Endothelial cell of umbilical vein (primary cell): ENCODE measurements at regions of chr2 and their contacts with region 1.

Region 1: GRCh38 chr2:202278944-202279343 is 13.4 kb downstream of the NOP58 start:
- DNase-seq: peak; percentile 88
- H3K4me3 ChIP-seq: peak overlapping the region in 1 of 3 experiments; percentile 12
- H3K27ac ChIP-seq: peak overlapping the region; percentile 88
- H3K4me1 ChIP-seq: peaks cover 24% of the 10 kb centered on the region
- H3K27me3 ChIP-seq: no peaks in the 10 kb centered on the region
- CTCF ChIP-seq: peak; percentile 41 to 61
- POLR2A ChIP-seq: no peak

Region 2: GRCh38 chr2:201768918-201769317 is 510.0 kb before region 1 on chr2:
- CTCF ChIA-PET with region 1: no interaction called
- POLR2A ChIA-PET with region 1: no interaction called
- dilution Hi-C with region 1: no loop called
- intact Hi-C with region 1: no loop called
- DNase-seq: no peak
- H3K4me3 ChIP-seq: no peak overlapping the region
- H3K27ac ChIP-seq: no peak overlapping the region
- H3K4me1 ChIP-seq: peaks cover 8% of the 10 kb centered on the region
- H3K27me3 ChIP-seq: no peaks in the 10 kb centered on the region
- CTCF ChIP-seq: no peak
- POLR2A ChIP-seq: no peak

Region 3: DNA sequence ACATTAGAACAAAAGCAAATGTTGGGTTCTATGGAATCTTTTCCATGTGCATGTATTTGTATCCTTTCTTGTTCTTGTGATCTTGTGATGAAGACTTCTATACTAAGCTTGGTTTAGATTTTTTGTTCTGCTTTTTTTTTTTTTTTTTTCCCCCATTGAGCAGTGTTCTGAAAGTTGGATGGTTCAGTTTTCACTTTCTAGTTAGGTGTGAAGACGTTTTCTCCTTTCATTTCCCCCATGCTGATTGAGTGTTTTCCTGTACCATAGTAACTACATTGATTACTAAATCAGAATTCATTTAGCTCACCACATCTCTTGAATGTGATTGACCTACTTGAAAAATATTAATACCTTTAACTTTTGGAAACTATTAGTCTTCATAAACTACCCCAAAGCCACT is 20.8 kb after region 1 on chr2:
- CTCF ChIA-PET with region 1: interaction called, 15 read pairs
- POLR2A ChIA-PET with region 1: no interaction called
- dilution Hi-C with region 1: no loop called
- intact Hi-C with region 1: no loop called
- DNase-seq: no peak
- H3K4me3 ChIP-seq: no peak overlapping the region
- H3K27ac ChIP-seq: no peak overlapping the region
- H3K4me1 ChIP-seq: peaks cover 7% of the 10 kb centered on the region
- H3K27me3 ChIP-seq: no peaks in the 10 kb centered on the region
- CTCF ChIP-seq: no peak
- POLR2A ChIP-seq: no peak

Region 4: DNA sequence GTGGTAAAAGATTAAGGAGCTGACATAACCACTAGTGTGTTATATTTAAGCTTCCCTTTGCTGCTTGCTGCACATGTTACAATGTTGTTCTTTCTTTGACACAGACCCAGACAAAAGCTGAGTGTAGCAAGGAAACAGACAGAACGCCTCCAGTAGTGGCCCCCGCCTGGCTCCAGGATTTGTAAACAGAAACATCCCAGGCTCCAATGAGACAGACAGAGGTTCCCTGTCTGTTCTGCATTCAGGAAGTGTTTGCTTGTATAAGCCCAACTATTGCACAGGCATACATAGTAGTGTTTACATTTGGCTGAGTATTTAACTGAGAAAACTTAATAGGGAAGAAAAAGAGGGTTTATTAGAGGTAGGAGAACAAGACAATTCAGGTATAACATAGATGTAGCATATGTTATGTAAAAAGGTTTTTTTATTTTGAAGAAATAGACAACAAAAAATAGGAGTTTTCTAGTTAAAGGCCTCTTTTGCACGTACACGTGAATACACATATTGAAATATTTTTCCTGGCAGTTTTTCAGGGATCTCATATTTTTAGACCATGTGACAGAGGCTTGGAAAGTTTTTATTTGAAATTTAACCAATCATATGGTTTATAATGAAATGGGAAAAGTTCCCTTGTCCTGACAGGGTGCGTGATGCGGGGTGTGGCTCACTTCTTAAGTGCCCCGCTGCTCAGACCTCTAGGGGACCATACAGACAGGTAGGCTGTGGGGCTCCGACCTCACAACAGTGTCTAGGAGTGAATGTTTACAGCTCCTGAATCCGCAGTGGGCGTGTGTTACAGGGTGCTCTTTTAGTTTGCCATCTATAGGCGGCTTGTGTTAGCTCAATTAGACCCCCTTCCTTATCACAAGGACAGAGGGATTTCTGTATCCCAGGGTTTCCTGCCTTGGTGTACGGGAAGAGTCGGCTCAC is 215.6 kb after region 1 on chr2:
- CTCF ChIA-PET with region 1: interaction called, 4 read pairs
- POLR2A ChIA-PET with region 1: no interaction called
- dilution Hi-C with region 1: no loop called
- intact Hi-C with region 1: loop called (anchors 2 kb)
- DNase-seq: peak; percentile 93
- H3K4me3 ChIP-seq: no peak overlapping the region
- H3K27ac ChIP-seq: peak overlapping the region; percentile 50
- H3K4me1 ChIP-seq: peaks cover 22% of the 10 kb centered on the region
- H3K27me3 ChIP-seq: no peaks in the 10 kb centered on the region
- CTCF ChIP-seq: no peak
- POLR2A ChIP-seq: no peak